Activated CD4-positive, alpha-beta memory T cell treated with anti-CD3 and anti-CD28 coated beads, Interleukin-2, amount 10 ng/mL, durations not matched to agents 7 days and 5 days (primary cell): ENCODE measurements at regions of chr12 and their contacts with region 1.

Region 1: GRCh38 chr12:48988030-48988649 is 10.0 kb downstream of the WNT1 start:
- DNase-seq: peak; percentile 79
- H3K4me3 Mint-ChIP-seq: no peak overlapping the region
- H3K27ac Mint-ChIP-seq: no peak overlapping the region
- H3K4me1 Mint-ChIP-seq: peaks cover 4% of the 10 kb centered on the region
- H3K27me3 Mint-ChIP-seq: peaks cover 68% of the 10 kb centered on the region

Region 2: GRCh38 chr12:48824112-48824511 is 164.0 kb before region 1 on chr12:
- CTCF ChIA-PET with region 1: no interaction called
- POLR2A ChIA-PET with region 1: no interaction called
- DNase-seq: peak; percentile 62
- H3K4me3 Mint-ChIP-seq: no peak overlapping the region
- H3K27ac Mint-ChIP-seq: peak overlapping the region; percentile 8
- H3K4me1 Mint-ChIP-seq: peaks cover 23% of the 10 kb centered on the region
- H3K27me3 Mint-ChIP-seq: peaks cover 5% of the 10 kb centered on the region

Region 3: GRCh38 chr12:48903982-48904411 is 84.1 kb before region 1 on chr12:
- CTCF ChIA-PET with region 1: interaction called, 10 read pairs
- POLR2A ChIA-PET with region 1: no interaction called
- DNase-seq: peak; percentile 84
- H3K4me3 Mint-ChIP-seq: peak overlapping the region; percentile 52
- H3K27ac Mint-ChIP-seq: no peak overlapping the region
- H3K4me1 Mint-ChIP-seq: peaks cover 21% of the 10 kb centered on the region
- H3K27me3 Mint-ChIP-seq: peaks cover 8% of the 10 kb centered on the region

Region 4: GRCh38 chr12:48966177-48966895 is 21.8 kb before region 1 on chr12:
- CTCF ChIA-PET with region 1: interaction called, 16 read pairs
- POLR2A ChIA-PET with region 1: no interaction called
- DNase-seq: no peak
- H3K4me3 Mint-ChIP-seq: no peak overlapping the region
- H3K27ac Mint-ChIP-seq: no peak overlapping the region
- H3K4me1 Mint-ChIP-seq: peaks cover 19% of the 10 kb centered on the region
- H3K27me3 Mint-ChIP-seq: peaks cover 47% of the 10 kb centered on the region

Region 5: DNA sequence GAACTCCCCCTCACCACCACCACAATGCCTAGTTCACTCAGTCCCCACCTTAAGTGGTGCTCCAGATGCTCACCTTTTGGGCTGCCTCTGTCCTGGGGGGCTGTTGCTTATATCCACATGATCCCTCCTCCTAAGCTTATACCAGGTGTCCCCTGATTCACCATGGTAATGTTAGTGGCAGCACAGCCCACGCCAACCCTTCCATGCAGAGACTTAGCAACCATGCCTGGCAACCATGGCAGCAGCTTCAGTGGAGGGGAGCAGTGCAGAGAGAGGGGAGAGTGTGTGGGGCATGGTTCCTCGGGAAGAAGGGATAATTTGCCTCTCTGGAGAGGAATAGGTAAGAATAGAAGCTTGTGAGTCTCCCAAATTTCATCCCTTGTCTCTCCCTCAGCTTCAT is 12.2 kb after region 1 on chr12:
- CTCF ChIA-PET with region 1: interaction called, 45 read pairs
- POLR2A ChIA-PET with region 1: interaction called, 5 read pairs
- DNase-seq: no peak
- H3K4me3 Mint-ChIP-seq: no peak overlapping the region
- H3K27ac Mint-ChIP-seq: no peak overlapping the region
- H3K4me1 Mint-ChIP-seq: peaks cover 30% of the 10 kb centered on the region
- H3K27me3 Mint-ChIP-seq: peaks cover 37% of the 10 kb centered on the region

Region 6: DNA sequence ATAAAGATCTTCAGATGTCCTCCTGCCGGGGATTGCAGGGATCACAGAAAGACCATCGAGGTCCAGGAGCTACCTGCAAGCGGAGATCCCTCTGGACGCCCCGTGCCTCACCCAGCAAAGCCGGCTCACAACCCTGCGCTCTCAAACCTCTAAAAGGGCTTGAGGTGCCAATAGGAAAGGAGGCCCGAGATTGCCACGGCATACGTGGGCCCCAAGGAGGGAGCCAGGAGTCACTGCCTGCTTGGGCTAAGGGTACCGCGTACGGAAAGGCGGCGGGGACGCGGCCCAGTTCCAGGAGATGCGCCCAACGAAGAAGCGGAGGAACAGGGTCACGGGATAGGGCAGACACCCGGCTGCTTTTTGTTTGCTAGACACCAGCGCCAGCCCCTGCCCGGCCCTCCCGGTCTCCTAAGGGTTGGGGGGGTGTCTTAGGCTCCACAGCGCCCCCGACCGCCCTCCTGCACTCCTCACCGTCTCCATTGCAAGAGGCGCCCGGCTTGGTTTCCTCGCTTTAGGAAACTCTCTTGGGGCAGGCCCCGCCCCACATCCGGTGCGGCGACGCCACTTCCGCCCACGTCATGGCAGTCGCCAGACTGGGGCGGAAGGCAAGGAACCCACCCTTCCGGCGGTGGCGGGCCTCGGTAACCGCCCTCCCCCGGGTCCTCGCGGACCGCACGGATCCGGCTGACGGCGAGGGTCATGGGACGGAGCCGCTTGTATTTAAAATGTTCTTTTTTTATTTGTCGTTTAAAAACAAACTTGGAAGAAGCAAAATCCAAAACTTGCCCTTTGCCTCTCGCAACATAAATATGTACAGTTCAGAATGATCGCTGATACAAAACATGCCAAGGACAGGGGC is 30.4 kb after region 1 on chr12 and contains the start of gene PRKAG1:
- CTCF ChIA-PET with region 1: interaction called, 40 read pairs
- POLR2A ChIA-PET with region 1: interaction called, 5 read pairs
- DNase-seq: peak; percentile 97
- H3K4me3 Mint-ChIP-seq: peak within 1 kb of the TSS; percentile 90
- H3K27ac Mint-ChIP-seq: peak within 1 kb of the TSS; percentile 98
- H3K4me1 Mint-ChIP-seq: peaks cover 46% of the 10 kb centered on the region
- H3K27me3 Mint-ChIP-seq: no peaks in the 10 kb centered on the region
- total RNA-seq, gene PRKAG1: 65.9 to 70.2 TPM

Region 7: GRCh38 chr12:49088190-49088931 is 100.2 kb after region 1 on chr12:
- CTCF ChIA-PET with region 1: interaction called, 13 read pairs
- POLR2A ChIA-PET with region 1: interaction called, 3 read pairs
- DNase-seq: peak; percentile 75
- H3K4me3 Mint-ChIP-seq: peak overlapping the region; percentile 22
- H3K27ac Mint-ChIP-seq: peak overlapping the region; percentile 24
- H3K4me1 Mint-ChIP-seq: peaks cover 64% of the 10 kb centered on the region
- H3K27me3 Mint-ChIP-seq: peaks cover 44% of the 10 kb centered on the region

Region 8: GRCh38 chr12:49138587-49138986 is 150.4 kb after region 1 on chr12:
- CTCF ChIA-PET with region 1: no interaction called
- POLR2A ChIA-PET with region 1: no interaction called
- DNase-seq: no peak
- H3K4me3 Mint-ChIP-seq: no peak overlapping the region
- H3K27ac Mint-ChIP-seq: no peak overlapping the region
- H3K4me1 Mint-ChIP-seq: peaks cover 9% of the 10 kb centered on the region
- H3K27me3 Mint-ChIP-seq: no peaks in the 10 kb centered on the region